ENCODE measurements at regions of chr17 and their contacts with region 1.

Region 1: GRCh38 chr17:8314797-8315763 is 5.0 kb downstream of the ARHGEF15 start:
- DNase-seq: peak in 1 of 3 donors; percentile 38
- ATAC-seq: no peak
- H3K4me3 ChIP-seq: no peak overlapping the region
- H3K27ac ChIP-seq: no peak overlapping the region
- H3K4me1 ChIP-seq: no peaks in the 10 kb centered on the region
- H3K27me3 ChIP-seq: no peaks in the 10 kb centered on the region

Region 2: DNA sequence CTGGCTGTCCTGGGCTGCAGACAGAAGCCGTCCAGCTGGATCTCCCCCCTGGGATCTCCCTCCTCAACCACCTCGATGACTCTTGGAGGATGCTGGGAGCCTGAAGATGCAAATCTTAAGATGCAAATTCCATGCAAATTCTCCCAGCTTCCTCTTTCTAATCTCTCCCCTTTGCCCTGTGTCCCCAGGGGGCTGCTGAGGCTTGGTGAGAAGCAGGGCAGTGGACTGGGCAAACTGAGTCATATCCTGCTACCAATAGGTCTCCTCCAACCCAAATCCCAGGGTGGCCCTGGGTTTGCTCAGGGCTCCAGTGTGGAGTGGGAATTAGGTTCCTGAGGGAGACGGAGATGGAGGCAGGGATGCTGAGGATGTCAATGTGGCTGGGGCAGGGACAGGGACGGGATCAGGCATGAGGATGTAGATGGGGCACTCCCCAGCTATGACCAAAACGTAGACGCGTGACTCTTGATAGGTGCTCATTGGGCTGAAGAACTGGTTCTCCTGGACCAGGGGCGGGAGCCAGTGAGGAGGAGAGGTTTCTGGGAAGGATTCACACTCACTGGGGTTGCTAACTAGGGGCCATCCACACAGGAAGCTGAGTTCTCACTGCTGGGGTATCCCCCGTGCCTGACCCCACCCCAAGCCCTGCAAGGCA is 223.9 kb before region 1 on chr17:
- intact Hi-C with region 1: loop called in 1 of 4 experiments (anchors 10 kb)
- DNase-seq: no peak
- ATAC-seq: peak in 1 of 2 donors; percentile 25
- H3K4me3 ChIP-seq: no peak overlapping the region
- H3K27ac ChIP-seq: no peak overlapping the region
- H3K4me1 ChIP-seq: no peaks in the 10 kb centered on the region
- H3K27me3 ChIP-seq: no peaks in the 10 kb centered on the region

Region 3: GRCh38 chr17:8359769-8360168 is 44.7 kb after region 1 on chr17:
- intact Hi-C with region 1: loop called in 1 of 4 experiments (anchors 10 kb)
- DNase-seq: no peak
- ATAC-seq: peak; percentile 19 to 78
- H3K4me3 ChIP-seq: no peak overlapping the region
- H3K27ac ChIP-seq: peak overlapping the region; percentile 80
- H3K4me1 ChIP-seq: peaks cover 7% of the 10 kb centered on the region
- H3K27me3 ChIP-seq: no peaks in the 10 kb centered on the region